ENCODE measurements at regions of chr9 and their contacts with region 1.

Region 1: GRCh38 chr9:89597711-89598625 is 6.8 kb upstream of the GADD45G start:
- DNase-seq: peak; percentile 67
- ATAC-seq: peak; percentile 30
- H3K4me3 Mint-ChIP-seq: no peak overlapping the region
- H3K27ac Mint-ChIP-seq: no peak overlapping the region
- H3K4me1 Mint-ChIP-seq: peaks cover 14% of the 10 kb centered on the region
- H3K27me3 Mint-ChIP-seq: no peaks in the 10 kb centered on the region
- CTCF ChIP-seq: peak; percentile 56

Region 2: DNA sequence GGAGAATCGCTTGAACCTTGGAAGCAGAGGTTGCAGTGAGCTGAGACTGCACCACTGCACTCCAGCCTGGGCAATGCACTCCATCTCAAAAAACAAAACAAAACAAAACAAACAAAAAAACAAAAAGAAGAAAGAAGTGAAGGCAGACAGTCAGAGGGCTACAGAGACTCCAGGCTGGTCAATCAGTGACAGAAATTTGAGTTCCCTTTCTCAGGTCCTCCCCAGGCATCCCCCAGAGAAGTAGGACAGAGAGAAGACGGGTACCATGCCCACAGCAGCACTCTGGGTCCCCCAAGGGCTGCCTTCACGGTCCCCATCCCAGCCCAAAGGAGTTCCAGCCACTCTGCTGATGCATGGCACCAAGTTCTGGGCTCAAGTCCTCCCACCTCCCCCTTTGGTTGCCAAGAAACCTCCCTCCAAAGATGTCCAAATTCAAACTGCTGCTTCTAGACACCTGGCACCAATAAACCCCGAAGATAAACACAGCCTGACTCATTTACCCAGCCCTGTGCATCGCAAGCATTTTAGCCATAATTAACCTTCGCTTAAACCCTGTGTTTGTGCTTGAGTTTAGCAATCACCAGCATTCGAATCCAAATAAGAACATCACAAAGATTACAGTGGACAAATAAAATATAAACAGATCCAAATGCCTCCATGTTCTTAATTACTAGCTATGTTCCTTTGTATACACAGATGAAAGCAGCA is 124.1 kb before region 1 on chr9:
- CTCF ChIA-PET with region 1: no interaction called
- POLR2A ChIA-PET with region 1: no interaction called
- DNase-seq: no peak
- ATAC-seq: no peak
- H3K4me3 Mint-ChIP-seq: no peak overlapping the region
- H3K27ac Mint-ChIP-seq: peak overlapping the region; percentile 51
- H3K4me1 Mint-ChIP-seq: peaks cover 41% of the 10 kb centered on the region
- H3K27me3 Mint-ChIP-seq: no peaks in the 10 kb centered on the region
- CTCF ChIP-seq: no peak

Region 3: DNA sequence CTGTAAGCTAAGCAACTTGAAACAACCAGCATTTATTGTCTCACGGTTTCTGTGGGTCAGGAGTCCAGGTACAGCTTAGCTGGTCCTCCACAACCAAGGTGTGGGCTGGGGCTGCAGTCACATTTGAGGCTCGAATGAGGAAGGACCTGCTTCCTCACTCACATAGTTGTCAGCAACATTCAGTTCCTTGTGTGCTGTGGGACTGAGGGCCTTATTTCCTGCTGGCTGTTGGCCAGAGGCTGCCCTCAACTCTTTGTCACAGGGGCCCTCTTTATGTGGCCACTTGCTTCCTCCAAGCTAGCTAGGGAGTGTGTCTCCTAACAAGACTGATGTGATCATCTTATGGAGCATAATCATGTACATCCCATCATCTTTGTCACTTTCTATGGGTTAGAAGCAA is 70.9 kb before region 1 on chr9:
- CTCF ChIA-PET with region 1: no interaction called
- POLR2A ChIA-PET with region 1: no interaction called
- DNase-seq: no peak
- ATAC-seq: no peak
- H3K4me3 Mint-ChIP-seq: no peak overlapping the region
- H3K27ac Mint-ChIP-seq: no peak overlapping the region
- H3K4me1 Mint-ChIP-seq: peaks cover 6% of the 10 kb centered on the region
- H3K27me3 Mint-ChIP-seq: no peaks in the 10 kb centered on the region
- CTCF ChIP-seq: no peak

Region 4: GRCh38 chr9:89542401-89543021 is 55.5 kb before region 1 on chr9:
- CTCF ChIA-PET with region 1: interaction called, 25 read pairs
- POLR2A ChIA-PET with region 1: no interaction called
- DNase-seq: no peak
- ATAC-seq: no peak
- H3K4me3 Mint-ChIP-seq: no peak overlapping the region
- H3K27ac Mint-ChIP-seq: no peak overlapping the region
- H3K4me1 Mint-ChIP-seq: peaks cover 20% of the 10 kb centered on the region
- H3K27me3 Mint-ChIP-seq: peaks cover 3% of the 10 kb centered on the region; the same call in 1 of the 2 replicates
- CTCF ChIP-seq: no peak

Region 5: DNA sequence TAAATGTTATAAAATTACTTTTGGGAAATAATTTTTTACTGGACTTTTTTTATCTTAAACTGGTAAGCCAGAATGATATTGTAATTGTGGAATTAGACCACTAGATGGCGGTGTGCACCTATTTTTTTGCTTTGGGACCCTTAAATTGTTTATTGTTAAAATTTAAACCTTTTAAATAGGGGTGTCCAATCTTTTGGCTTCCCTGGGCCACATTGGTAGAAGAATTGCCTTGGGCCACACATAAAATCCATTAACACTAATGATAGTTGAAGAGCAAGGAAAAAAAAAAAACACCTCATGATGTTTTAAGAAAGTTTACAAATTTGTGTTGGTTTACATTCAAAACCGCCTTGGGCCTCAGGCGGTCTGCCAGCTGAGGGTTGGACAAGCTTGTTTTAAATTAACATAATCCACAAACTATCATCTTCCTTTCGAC is 21.5 kb before region 1 on chr9:
- CTCF ChIA-PET with region 1: interaction called, 123 read pairs
- POLR2A ChIA-PET with region 1: interaction called, 3 read pairs
- DNase-seq: no peak
- ATAC-seq: no peak
- H3K4me3 Mint-ChIP-seq: no peak overlapping the region
- H3K27ac Mint-ChIP-seq: no peak overlapping the region
- H3K4me1 Mint-ChIP-seq: no peaks in the 10 kb centered on the region
- H3K27me3 Mint-ChIP-seq: no peaks in the 10 kb centered on the region
- CTCF ChIP-seq: peak; percentile 68

Region 6: DNA sequence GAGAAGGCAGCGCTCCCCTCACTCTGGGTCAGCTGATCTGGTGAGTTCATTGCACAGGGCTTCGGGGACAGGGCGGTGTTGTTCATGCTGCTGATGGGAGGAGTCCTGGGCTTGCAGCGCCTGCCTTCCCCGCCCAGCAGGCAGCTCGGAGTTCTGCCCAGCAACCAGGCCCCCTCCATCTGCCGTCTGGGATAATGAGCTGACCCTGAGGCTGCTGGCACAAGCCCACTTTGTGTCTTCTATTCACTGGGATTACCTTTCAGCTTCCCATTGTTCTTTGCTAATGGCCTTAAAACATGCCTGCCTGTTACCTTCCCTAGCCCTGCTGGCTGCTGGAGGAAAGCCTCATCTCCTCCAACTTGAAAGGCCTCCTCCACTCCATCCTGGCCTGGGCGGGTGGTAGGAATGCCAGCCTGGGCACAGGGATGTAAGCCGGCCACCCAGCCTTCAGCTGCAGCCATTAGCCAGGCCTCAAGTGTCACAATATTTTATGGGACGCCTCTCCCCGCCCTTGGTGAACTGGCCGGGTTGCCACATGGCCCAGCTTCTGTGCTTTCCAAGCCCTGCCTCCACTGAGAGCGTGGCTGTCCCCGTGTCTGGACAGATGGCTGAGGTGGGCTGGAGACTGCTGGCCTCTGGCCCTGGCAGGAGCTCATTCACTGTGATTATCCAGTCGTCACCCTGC is 77.2 kb after region 1 on chr9:
- CTCF ChIA-PET with region 1: interaction called, 30 read pairs
- POLR2A ChIA-PET with region 1: no interaction called
- DNase-seq: peak; percentile 61
- ATAC-seq: peak; percentile 77
- H3K4me3 Mint-ChIP-seq: no peak overlapping the region
- H3K27ac Mint-ChIP-seq: no peak overlapping the region
- H3K4me1 Mint-ChIP-seq: peaks cover 68% of the 10 kb centered on the region
- H3K27me3 Mint-ChIP-seq: peaks cover 21% of the 10 kb centered on the region
- CTCF ChIP-seq: no peak

Region 7: DNA sequence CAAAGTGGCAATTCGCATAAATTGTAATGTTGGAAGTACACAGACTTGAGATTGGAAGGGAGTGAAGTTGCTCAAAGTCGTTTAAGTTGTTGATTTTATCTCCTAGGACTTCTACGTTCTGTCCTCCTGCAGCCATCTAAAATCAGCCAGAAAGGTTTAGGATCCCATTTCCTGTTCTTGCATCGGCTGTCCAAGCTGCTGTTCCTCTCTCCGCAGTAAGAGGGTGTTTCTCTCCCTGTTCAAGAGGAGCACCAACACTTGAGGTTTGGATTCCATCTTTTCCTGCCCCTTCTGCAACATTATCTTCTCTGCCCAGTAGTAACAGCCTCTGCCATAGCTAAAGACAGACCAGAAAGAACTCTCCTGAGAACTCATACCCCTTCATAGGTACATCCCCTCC is 380.2 kb after region 1 on chr9:
- CTCF ChIA-PET with region 1: interaction called, 10 read pairs
- POLR2A ChIA-PET with region 1: no interaction called
- DNase-seq: no peak
- ATAC-seq: peak; percentile 82
- H3K4me3 Mint-ChIP-seq: no peak overlapping the region
- H3K27ac Mint-ChIP-seq: no peak overlapping the region
- H3K4me1 Mint-ChIP-seq: peaks cover 6% of the 10 kb centered on the region; the same call in 1 of the 2 replicates
- H3K27me3 Mint-ChIP-seq: no peaks in the 10 kb centered on the region; the same call in 1 of the 2 replicates
- CTCF ChIP-seq: no peak

Region 8: DNA sequence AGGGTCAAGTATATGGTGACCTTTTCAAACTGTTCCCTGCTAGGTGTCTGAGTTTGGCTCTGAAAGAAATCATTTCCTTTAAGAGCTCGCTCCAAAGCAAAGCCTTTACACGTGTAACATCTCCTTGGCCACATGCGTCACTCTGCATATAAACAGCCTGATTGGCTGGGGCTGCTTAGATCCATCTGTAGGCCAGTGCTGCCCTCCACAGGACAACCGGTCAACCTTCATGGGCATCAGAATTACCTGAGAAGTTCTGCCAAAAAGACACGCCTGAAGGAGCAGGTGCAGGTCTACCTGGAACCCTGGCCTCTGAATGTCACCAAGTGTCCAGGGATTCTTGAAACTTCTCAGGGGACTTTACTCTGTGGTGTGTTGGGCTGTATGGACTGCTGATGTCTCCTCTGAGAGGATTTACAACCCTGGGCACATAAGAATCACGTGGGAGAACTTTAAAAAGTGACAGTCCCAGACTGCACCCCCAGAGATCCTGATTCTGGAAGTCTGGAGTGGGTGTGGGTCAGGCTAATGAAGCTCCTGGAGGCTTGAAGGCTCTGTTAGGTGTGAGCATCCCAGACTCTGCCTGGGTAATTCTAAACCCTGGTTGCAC is 504.4 kb after region 1 on chr9:
- CTCF ChIA-PET with region 1: interaction called, 157 read pairs
- POLR2A ChIA-PET with region 1: interaction called, 3 read pairs
- DNase-seq: peak; percentile 80
- ATAC-seq: peak; percentile 99
- H3K4me3 Mint-ChIP-seq: no peak overlapping the region
- H3K27ac Mint-ChIP-seq: no peak overlapping the region
- H3K4me1 Mint-ChIP-seq: peaks cover 3% of the 10 kb centered on the region; the same call in 1 of the 2 replicates
- H3K27me3 Mint-ChIP-seq: no peaks in the 10 kb centered on the region
- CTCF ChIP-seq: peak; percentile 74; the same call in 1 of the 2 replicates